Activated CD8-positive, alpha-beta memory T cell treated with anti-CD3 and anti-CD28 coated beads, Interleukin-2, amount 10 ng/mL, durations not matched to agents 7 days and 5 days (primary cell): ENCODE measurements at regions of chr6 and their contacts with region 1.

Region 1: GRCh38 chr6:37314487-37315156 is 39.2 kb upstream of the RNF8 start:
- DNase-seq: peak; percentile 67
- ATAC-seq: peak; percentile 82
- H3K4me3 Mint-ChIP-seq: no peak overlapping the region
- H3K27ac Mint-ChIP-seq: peak overlapping the region; percentile 58
- H3K4me1 Mint-ChIP-seq: peaks cover 7% of the 10 kb centered on the region
- H3K27me3 Mint-ChIP-seq: no peaks in the 10 kb centered on the region

Region 2: DNA sequence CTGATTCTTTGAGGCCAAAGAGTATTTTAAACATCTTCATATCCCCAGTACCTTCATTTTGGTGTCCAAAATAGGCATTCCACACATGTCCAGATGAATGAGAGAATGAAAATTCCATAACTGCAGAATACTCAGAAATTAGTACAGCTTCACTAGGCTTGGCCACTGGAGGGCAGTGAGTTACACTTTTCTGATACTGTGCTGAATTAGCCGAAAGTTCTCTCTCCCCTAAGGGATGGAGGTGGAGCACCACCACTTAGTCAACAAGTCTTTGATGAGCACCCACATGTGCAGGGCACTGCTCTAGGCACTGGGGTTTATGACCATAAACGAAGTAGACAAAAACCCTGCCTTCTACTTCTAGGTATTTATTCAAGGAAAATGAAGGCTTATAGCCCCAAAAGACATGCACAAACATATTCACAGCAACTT is 10.7 kb before region 1 on chr6:
- CTCF ChIA-PET with region 1: interaction called, 26 read pairs
- DNase-seq: no peak
- ATAC-seq: peak; percentile 72
- H3K4me3 Mint-ChIP-seq: no peak overlapping the region
- H3K27ac Mint-ChIP-seq: no peak overlapping the region
- H3K4me1 Mint-ChIP-seq: peaks cover 8% of the 10 kb centered on the region
- H3K27me3 Mint-ChIP-seq: no peaks in the 10 kb centered on the region

Region 3: GRCh38 chr6:37369321-37370201 is 54.9 kb after region 1 on chr6:
- CTCF ChIA-PET with region 1: no interaction called
- DNase-seq: no peak
- ATAC-seq: no peak
- H3K4me3 Mint-ChIP-seq: no peak overlapping the region
- H3K27ac Mint-ChIP-seq: peak overlapping the region; percentile 42
- H3K4me1 Mint-ChIP-seq: peaks cover 14% of the 10 kb centered on the region
- H3K27me3 Mint-ChIP-seq: no peaks in the 10 kb centered on the region